ENCODE measurements at regions of chr1 and their contacts with region 1.

Region 1: DNA sequence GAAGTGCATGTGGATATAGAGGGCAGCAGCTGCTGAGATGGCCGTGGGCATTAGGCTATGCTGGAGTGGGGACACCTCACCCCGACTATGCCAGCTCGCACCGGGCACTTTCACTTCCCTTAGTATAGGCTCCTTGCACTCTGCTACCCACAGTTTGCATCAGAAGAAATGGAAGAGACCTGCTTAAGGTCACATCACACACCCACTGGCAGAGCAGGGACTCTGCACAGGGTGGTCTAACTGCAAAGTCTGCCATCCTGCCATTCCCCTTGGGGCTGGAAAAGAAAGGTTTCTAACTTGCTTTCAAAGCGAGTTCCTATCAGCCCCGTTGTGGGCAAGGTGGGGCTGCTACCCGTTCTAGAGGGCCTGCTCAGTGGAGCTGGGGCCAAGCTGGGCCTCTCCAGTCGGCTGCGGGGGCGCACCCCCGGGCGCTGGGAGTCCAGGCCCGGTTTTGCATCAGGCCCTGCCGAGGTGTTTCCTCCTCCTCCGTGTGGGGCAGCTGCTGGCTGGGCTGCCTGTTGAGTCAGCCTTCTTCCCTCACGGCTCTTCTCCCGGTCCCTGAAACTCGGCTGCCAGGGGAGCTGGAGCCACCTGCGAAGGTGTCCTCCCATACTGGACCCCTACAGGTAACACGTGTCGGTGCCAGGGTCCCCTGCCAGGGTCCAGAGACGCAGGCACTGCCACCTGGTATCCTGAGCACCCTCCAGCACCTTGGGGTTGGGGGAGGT is at the start of gene SYTL1:
- DNase-seq: no peak
- ATAC-seq: peak in 2 of 4 donors; percentile 23 to 32
- H3K4me3 ChIP-seq: peak within 1 kb of the TSS; percentile 4
- H3K27ac ChIP-seq: no peak within 1 kb of the TSS
- H3K4me1 ChIP-seq: no peaks in the 10 kb centered on the region
- H3K27me3 ChIP-seq: peaks cover 0 to 3% (median 0%) of the 10 kb centered on the region in 3 donors
- CTCF ChIP-seq: no peak
- total RNA-seq, gene SYTL1: 0.41 to 1.3 (median 0.68) TPM

Region 2: GRCh38 chr1:25675729-25676476 is 1665.8 kb before region 1 on chr1:
- intact Hi-C with region 1: loop called in 1 of 2 experiments (anchors 10 kb)
- DNase-seq: no peak
- ATAC-seq: peak in 1 of 4 donors; percentile 29
- H3K4me3 ChIP-seq: no peak overlapping the region
- H3K27ac ChIP-seq: no peak overlapping the region
- H3K4me1 ChIP-seq: peaks cover 15% of the 10 kb centered on the region
- H3K27me3 ChIP-seq: no peaks in the 10 kb centered on the region
- CTCF ChIP-seq: no peak

Region 3: DNA sequence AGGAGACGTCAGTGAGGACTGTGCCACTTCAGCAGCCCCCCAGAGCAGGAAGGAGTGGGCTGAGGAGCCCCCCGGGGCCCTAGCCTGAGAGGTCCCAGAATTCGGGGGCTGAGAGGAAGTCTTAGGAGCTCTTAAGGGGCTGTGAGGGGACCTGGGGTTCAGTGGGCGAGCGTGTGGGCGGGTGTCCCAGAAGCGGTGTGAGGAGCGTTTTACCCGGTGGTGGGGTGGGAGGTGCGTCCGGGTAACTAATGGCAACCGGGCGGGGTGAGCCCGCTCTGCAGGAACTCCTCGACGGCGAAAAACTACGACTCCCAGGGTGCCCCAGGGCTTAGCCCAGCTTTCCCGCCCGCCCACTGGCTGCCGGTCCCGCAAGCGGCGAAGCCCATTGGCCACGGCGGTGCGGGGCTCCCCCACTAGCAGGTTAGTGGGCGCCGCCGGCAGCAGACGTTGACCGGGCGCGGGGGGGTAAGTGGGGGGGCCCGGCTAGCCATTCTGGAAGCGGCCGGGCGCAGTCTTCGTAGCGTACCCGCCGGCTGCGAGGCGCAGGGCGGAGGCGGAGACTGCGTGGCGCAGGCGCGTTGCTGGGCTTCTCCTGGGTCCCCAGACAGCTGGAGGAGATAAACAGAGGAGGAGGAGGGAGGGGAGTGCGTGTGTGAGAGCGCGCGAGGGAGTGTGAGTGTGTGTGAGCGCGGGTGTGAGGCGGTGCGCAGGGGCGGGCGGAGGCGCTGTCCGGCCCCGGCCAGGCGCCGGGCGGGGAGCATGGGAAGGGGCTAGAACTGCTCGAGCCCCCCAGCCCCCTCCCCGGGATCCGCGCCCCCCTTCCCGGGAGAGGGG is 107.4 kb before region 1 on chr1 and contains the start of gene WDTC1:
- intact Hi-C with region 1: no loop called
- DNase-seq: peak; percentile 99
- ATAC-seq: peak; percentile 98 to 99 (median 99)
- H3K4me3 ChIP-seq: peak within 1 kb of the TSS; percentile 98
- H3K27ac ChIP-seq: peak within 1 kb of the TSS; percentile 91
- H3K4me1 ChIP-seq: peaks cover 27% of the 10 kb centered on the region
- H3K27me3 ChIP-seq: no peaks in the 10 kb centered on the region
- CTCF ChIP-seq: no peak
- total RNA-seq, gene WDTC1: 55.6 to 66.1 (median 61.2) TPM